ENCODE measurements at regions of chr1 and their contacts with region 1.

Region 1: DNA sequence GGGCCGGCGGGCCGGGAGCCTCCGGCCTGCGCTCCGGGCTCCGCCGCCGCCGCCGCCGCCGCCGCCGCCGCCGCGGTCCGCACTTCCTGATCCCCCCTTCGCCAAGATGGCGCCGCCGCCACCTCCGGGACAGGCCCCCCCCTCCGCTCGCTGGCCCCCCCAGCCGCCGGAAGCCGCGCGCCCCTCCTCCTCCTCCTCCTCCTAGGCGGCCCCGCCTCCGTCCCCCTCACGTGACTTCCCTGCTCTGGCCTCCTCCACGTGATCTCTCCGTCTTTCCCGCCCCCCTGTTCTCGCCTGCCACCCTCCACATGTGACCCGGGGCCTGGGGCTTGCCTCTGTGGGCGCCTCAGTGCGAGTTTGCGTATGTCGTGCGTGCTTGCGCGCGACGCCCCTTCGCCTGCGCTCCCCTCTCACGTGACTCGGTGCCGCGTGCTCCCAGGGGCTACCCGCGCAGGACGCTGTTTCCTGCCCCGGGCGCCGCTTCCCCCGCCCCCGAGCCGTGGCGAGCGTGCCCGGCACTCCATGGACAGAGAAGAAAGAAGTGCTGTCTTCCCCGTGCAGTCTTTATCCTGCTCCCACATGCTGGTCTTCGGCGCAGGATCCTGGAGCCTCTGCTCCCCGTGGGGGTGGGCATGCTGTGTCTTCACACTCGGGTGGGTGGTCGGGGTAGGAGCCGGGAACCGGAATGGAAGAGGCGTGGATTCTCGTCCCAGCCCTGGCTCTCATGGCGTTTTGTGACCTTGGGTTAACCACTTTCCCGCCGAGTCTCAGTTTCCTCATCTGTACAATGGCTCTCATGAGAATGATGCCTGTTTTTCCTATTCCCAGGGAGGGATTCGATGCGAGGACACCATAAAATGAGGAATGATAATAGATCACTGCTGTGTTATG is at the start of gene UBE2Q1:
- DNase-seq: peak; percentile 100
- H3K4me3 ChIP-seq: peak within 1 kb of the TSS; percentile 79 to 95 (median 88)
- H3K27ac ChIP-seq: peak within 1 kb of the TSS; percentile 94 to 96 (median 94)
- H3K4me1 ChIP-seq: peaks cover 0 to 39% (median 34%) of the 10 kb centered on the region in 4 donors
- H3K27me3 ChIP-seq: no peaks in the 10 kb centered on the region
- CTCF ChIP-seq: no peak
- EP300 ChIP-seq: peak in 3 of 4 donors; percentile 41 to 97 (median 61)
- POLR2A ChIP-seq: peak in 1 of 2 donors; percentile 22
- total RNA-seq, gene UBE2Q1: 15.1 to 18.9 (median 16.3) TPM

Region 2: DNA sequence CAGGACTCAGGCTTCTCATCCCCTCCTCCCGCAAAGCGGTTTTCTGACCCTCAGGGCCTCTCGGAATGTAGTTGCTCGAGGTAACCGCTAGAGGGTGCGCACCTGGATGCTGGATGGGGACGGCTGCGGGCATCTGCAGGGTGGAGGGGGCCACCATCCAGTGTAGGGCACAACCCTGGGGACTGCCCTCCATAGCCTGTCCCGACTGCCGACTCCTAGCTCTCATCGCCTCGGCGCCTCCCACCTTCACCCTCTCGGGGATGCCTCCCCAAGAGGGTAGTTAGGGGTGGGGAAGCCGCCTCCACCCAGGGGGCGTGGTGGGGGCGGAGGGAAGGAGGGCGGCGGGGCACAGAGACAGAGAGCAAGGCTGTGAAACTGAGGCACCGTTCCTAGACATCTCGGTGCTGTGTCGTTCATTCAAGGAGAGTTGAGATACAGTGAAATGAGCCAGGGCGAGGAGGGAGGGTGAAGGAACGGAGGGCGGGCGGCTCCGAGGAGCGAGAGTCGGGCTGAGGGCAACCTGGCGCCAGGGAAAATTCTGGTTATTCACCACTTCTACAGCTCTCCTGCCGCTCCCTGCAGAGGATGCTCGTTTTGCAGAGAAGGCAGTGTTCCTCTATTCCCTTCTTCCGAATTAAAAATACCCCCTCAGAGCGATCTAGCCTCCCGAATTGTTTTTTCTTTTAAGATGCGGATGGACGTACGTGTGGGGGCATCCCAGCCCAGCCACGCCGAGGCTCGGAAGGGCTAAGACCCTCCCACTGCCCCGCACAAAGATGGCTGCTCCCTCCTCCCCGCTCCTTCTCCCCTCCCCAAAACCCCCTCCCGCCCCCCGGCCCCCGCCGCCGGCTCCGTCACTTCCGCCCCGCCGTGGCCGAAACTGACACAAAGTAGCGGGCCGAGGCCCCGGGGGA is 233.9 kb before region 1 on chr1 and contains the start of gene ATP8B2:
- intact Hi-C with region 1: loop called (anchors 5 kb)
- DNase-seq: peak; percentile 88
- H3K4me3 ChIP-seq: peak within 1 kb of the TSS; percentile 69 to 85 (median 76)
- H3K27ac ChIP-seq: peak within 1 kb of the TSS; percentile 93 to 98 (median 96)
- H3K4me1 ChIP-seq: peaks cover 0 to 50% (median 41%) of the 10 kb centered on the region in 4 donors
- H3K27me3 ChIP-seq: no peaks in the 10 kb centered on the region
- CTCF ChIP-seq: peak; percentile 86 to 92 (median 92)
- EP300 ChIP-seq: no peak
- POLR2A ChIP-seq: no peak
- total RNA-seq, gene ATP8B2: 53.1 to 64.3 (median 56.6) TPM

Region 3: GRCh38 chr1:154607609-154608396 is 49.0 kb after region 1 on chr1 and contains the start of gene ADAR:
- intact Hi-C with region 1: loop called (anchors 2 kb)
- DNase-seq: peak; percentile 98
- H3K4me3 ChIP-seq: peak within 1 kb of the TSS; percentile 64 to 98 (median 84)
- H3K27ac ChIP-seq: peak within 1 kb of the TSS; percentile 93 to 99 (median 96)
- H3K4me1 ChIP-seq: peaks cover 0 to 58% (median 50%) of the 10 kb centered on the region in 4 donors
- H3K27me3 ChIP-seq: no peaks in the 10 kb centered on the region
- CTCF ChIP-seq: no peak
- EP300 ChIP-seq: peak in 1 of 4 donors; percentile 10
- POLR2A ChIP-seq: peak; percentile 15 to 17
- total RNA-seq, gene ADAR: 59.4 to 103 (median 69.7) TPM

Region 4: GRCh38 chr1:154760469-154760933 is 201.7 kb after region 1 on chr1:
- intact Hi-C with region 1: loop called (anchors 2 kb)
- DNase-seq: peak; percentile 68
- H3K4me3 ChIP-seq: peak overlapping the region in 3 of 4 donors; percentile 21 to 47 (median 37)
- H3K27ac ChIP-seq: no peak overlapping the region
- H3K4me1 ChIP-seq: peaks cover 0 to 10% (median 8%) of the 10 kb centered on the region in 4 donors
- H3K27me3 ChIP-seq: peaks cover 0 to 20% (median 8%) of the 10 kb centered on the region in 3 donors
- CTCF ChIP-seq: peak; percentile 23 to 74 (median 53)
- EP300 ChIP-seq: no peak
- POLR2A ChIP-seq: no peak

Region 5: GRCh38 chr1:154878371-154879022 is 319.7 kb after region 1 on chr1:
- intact Hi-C with region 1: loop called (anchors 2 kb)
- DNase-seq: peak; percentile 89
- H3K4me3 ChIP-seq: no peak overlapping the region
- H3K27ac ChIP-seq: no peak overlapping the region
- H3K4me1 ChIP-seq: peaks cover 0 to 6% (median 0%) of the 10 kb centered on the region in 4 donors
- H3K27me3 ChIP-seq: peaks cover 0 to 4% (median 0%) of the 10 kb centered on the region in 3 donors
- CTCF ChIP-seq: peak; percentile 80 to 90 (median 84)
- EP300 ChIP-seq: no peak
- POLR2A ChIP-seq: no peak

Region 6: DNA sequence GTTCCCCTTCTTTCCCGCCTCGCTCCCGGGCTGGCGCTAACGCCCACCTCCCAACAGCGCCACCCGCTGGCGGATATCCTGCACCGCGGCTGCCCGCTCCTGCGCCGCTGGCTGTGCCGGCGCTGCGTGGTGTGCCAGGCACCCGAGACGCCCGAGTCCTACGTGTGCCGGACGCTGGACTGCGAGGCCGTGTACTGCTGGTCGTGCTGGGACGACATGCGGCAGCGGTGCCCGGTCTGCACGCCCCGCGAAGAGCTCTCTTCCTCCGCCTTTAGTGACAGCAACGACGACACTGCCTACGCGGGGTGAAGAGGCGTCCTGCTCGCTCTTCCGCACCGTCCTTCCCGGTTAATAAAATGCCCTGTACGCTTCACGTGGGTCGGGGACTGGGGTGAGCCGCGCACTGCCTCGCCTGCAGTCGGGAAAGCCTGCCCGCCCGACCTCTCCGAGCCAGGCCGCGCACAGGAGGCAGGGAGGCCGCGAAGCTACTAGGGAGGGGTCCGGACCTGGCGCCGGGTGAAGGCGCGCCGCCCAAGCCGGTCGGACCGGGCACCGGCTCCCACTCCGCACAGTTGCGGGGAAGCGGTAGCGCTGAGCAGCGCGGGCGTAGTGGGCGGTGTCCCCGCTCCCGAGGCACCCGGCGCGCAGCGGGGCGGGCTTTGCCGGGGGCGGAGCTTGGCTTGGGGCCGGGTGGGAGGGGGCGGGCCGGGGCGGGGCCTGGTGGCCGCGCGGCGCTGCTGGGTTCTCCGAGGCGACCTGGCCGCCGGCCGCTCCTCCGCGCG is 491.9 kb after region 1 on chr1 and contains the start of gene ADAM15:
- intact Hi-C with region 1: loop called (anchors 10 kb)
- DNase-seq: peak; percentile 93
- H3K4me3 ChIP-seq: peak within 1 kb of the TSS; percentile 57 to 85 (median 68)
- H3K27ac ChIP-seq: peak within 1 kb of the TSS; percentile 92 to 96 (median 92)
- H3K4me1 ChIP-seq: peaks cover 0 to 33% (median 22%) of the 10 kb centered on the region in 4 donors
- H3K27me3 ChIP-seq: no peaks in the 10 kb centered on the region
- CTCF ChIP-seq: peak; percentile 88 to 94 (median 94)
- EP300 ChIP-seq: no peak
- POLR2A ChIP-seq: peak in 1 of 2 donors; percentile 62
- total RNA-seq, gene ADAM15: 42.6 to 66.7 (median 53.1) TPM

Measured in sigmoid colon (tissue), 7 donors.